ENCODE measurements at regions of chr15 and their contacts with region 1.

Region 1: DNA sequence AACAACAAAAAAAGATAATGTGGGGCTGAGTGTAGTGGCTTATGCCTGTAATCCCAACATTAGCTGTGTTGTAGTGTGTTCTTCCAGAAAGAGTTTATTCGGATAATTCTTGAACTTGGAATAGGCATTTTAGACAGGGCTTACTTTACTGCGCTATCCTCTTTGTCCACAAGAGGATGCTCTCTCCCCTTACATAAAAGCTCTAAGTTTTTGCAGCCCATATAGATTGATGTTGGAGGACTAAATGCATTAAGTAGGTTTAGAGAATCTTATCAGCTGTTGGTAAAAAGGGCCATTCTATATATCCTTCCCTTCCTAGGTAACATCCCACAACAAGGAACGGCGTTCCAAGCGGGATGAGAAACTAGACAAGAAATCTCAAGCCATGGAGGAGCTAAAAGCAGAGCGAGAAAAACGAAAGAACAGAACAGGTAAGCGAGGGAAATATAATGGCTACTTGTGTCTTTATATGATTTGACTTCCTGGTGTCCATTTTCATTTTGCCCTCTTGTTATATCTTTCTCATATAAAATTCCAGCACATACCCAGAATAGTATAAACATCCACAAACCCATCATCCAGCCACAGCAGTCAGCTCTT is 27.8 kb upstream of the ITPKA start:
- DNase-seq: no peak
- ATAC-seq: peak; percentile 50; the same call in 1 of the 2 replicates
- H3K4me3 Mint-ChIP-seq: no peak overlapping the region
- H3K27ac Mint-ChIP-seq: no peak overlapping the region
- H3K4me1 Mint-ChIP-seq: no peaks in the 10 kb centered on the region
- H3K27me3 Mint-ChIP-seq: no peaks in the 10 kb centered on the region
- CTCF ChIP-seq: peak; percentile 69

Region 2: GRCh38 chr15:41387646-41388045 is 78.3 kb before region 1 on chr15:
- CTCF ChIA-PET with region 1: no interaction called
- POLR2A ChIA-PET with region 1: no interaction called
- DNase-seq: no peak
- ATAC-seq: no peak
- H3K4me3 Mint-ChIP-seq: no peak overlapping the region
- H3K27ac Mint-ChIP-seq: peak overlapping the region; percentile 10; the same call in 1 of the 2 replicates
- H3K4me1 Mint-ChIP-seq: no peaks in the 10 kb centered on the region
- H3K27me3 Mint-ChIP-seq: no peaks in the 10 kb centered on the region
- CTCF ChIP-seq: no peak

Region 3: GRCh38 chr15:41493205-41493901 is 27.4 kb after region 1 on chr15 and contains the start of gene ITPKA:
- CTCF ChIA-PET with region 1: interaction called, 10 read pairs
- POLR2A ChIA-PET with region 1: no interaction called
- DNase-seq: peak; percentile 80
- ATAC-seq: peak; percentile 64
- H3K4me3 Mint-ChIP-seq: peak within 1 kb of the TSS; percentile 67
- H3K27ac Mint-ChIP-seq: no peak within 1 kb of the TSS
- H3K4me1 Mint-ChIP-seq: peaks cover 14% of the 10 kb centered on the region
- H3K27me3 Mint-ChIP-seq: peaks cover 79% of the 10 kb centered on the region
- CTCF ChIP-seq: no peak
- total RNA-seq, gene ITPKA: 0.50 to 1.2 TPM (median 0.62 TPM) in 3 replicates

Region 4: GRCh38 chr15:41501931-41502794 is 36.2 kb after region 1 on chr15:
- CTCF ChIA-PET with region 1: interaction called, 36 read pairs
- POLR2A ChIA-PET with region 1: no interaction called
- DNase-seq: no peak
- ATAC-seq: peak; percentile 47
- H3K4me3 Mint-ChIP-seq: peak overlapping the region; percentile 61
- H3K27ac Mint-ChIP-seq: no peak overlapping the region
- H3K4me1 Mint-ChIP-seq: peaks cover 13% of the 10 kb centered on the region
- H3K27me3 Mint-ChIP-seq: peaks cover 100% of the 10 kb centered on the region
- CTCF ChIP-seq: no peak